CD8-positive, alpha-beta T cell (primary cell): ENCODE measurements at regions of chr20 and their contacts with region 1.

Region 1: GRCh38 chr20:41482647-41483552 is 116.3 kb upstream of the EMILIN3 start:
- DNase-seq: no peak
- ATAC-seq: no peak
- H3K4me3 ChIP-seq: no peak overlapping the region
- H3K4me3 Mint-ChIP-seq: no peak overlapping the region
- H3K27ac ChIP-seq: no peak overlapping the region
- H3K27ac Mint-ChIP-seq: peak overlapping the region; percentile 39
- H3K4me1 ChIP-seq: peaks cover 16% of the 10 kb centered on the region
- H3K4me1 Mint-ChIP-seq: peaks cover 18% of the 10 kb centered on the region
- H3K27me3 ChIP-seq: no peaks in the 10 kb centered on the region
- H3K27me3 Mint-ChIP-seq: no peaks in the 10 kb centered on the region
- CTCF ChIP-seq: no peak

Region 2: GRCh38 chr20:41436679-41437078 is 46.2 kb before region 1 on chr20:
- CTCF ChIA-PET with region 1: no interaction called
- POLR2A ChIA-PET with region 1: no interaction called
- intact Hi-C with region 1: loop called in 1 of 2 experiments (anchors 10 kb)
- DNase-seq: no peak
- ATAC-seq: no peak
- H3K4me3 ChIP-seq: no peak overlapping the region
- H3K4me3 Mint-ChIP-seq: no peak overlapping the region
- H3K27ac ChIP-seq: no peak overlapping the region
- H3K27ac Mint-ChIP-seq: peak overlapping the region; percentile 16
- H3K4me1 ChIP-seq: peaks cover 21% of the 10 kb centered on the region
- H3K4me1 Mint-ChIP-seq: peaks cover 47% of the 10 kb centered on the region
- H3K27me3 ChIP-seq: no peaks in the 10 kb centered on the region
- H3K27me3 Mint-ChIP-seq: no peaks in the 10 kb centered on the region
- CTCF ChIP-seq: no peak

Region 3: GRCh38 chr20:41513829-41514228 is 30.9 kb after region 1 on chr20:
- CTCF ChIA-PET with region 1: no interaction called
- POLR2A ChIA-PET with region 1: no interaction called
- intact Hi-C with region 1: no loop called
- DNase-seq: no peak
- ATAC-seq: no peak
- H3K4me3 ChIP-seq: no peak overlapping the region
- H3K4me3 Mint-ChIP-seq: no peak overlapping the region
- H3K27ac ChIP-seq: no peak overlapping the region
- H3K27ac Mint-ChIP-seq: no peak overlapping the region
- H3K4me1 ChIP-seq: no peaks in the 10 kb centered on the region
- H3K4me1 Mint-ChIP-seq: peaks cover 41% of the 10 kb centered on the region
- H3K27me3 ChIP-seq: no peaks in the 10 kb centered on the region
- H3K27me3 Mint-ChIP-seq: no peaks in the 10 kb centered on the region
- CTCF ChIP-seq: no peak